Activated CD4-positive, alpha-beta T cell treated with anti-CD3 and anti-CD28 coated beads for 36 hours (primary cell): ENCODE measurements at regions of chr11 and their contacts with region 1.

Region 1: GRCh38 chr11:14953904-14954303 is 18.2 kb downstream of the CALCA start:
- DNase-seq: no peak
- ATAC-seq: no peak
- H3K4me3 Mint-ChIP-seq: no peak overlapping the region
- H3K27ac Mint-ChIP-seq: no peak overlapping the region
- H3K4me1 Mint-ChIP-seq: no peaks in the 10 kb centered on the region
- H3K27me3 Mint-ChIP-seq: no peaks in the 10 kb centered on the region

Region 2: DNA sequence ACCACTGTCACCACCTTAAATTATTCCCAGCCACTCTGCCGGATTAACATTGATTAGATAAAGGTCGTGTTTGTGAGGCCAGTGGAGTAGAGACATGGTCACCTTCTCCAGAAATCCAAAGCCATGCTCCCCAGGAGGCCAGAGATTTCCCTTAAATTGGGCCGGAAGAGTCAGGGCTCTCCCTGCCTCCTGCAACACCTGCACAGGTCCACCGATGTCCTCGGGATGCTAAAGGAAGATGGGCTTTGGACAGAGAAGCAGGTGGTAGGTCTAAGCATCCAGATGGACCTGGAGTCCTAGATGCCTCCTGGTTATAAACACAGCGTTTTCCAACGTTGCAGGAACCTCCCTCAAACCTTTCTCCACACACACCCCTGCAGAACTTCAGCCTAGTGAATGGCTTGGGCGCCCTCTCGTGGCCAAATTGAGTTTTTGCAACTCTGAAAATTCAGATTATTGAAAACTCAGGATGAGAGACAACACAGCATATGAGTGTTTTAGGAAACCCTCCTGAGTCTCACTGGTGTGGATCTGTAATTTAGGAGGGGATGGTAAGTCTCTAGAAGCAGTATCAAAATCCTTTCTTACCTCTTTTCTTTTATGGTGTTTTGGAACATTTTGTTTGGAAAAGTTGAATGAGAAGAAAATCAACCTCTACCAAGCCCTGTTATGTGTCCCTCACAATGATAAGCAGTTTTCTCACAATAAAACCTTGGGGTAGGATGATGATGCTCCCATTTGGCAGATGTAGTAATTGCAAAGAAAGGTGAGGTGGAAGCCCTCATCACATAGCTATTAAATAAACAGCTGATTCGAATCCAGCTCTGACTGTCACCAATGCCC is 704.6 kb before region 1 on chr11:
- CTCF ChIA-PET with region 1: no interaction called
- POLR2A ChIA-PET with region 1: no interaction called
- intact Hi-C with region 1: no loop called
- DNase-seq: peak; percentile 82
- ATAC-seq: peak; percentile 73
- H3K4me3 Mint-ChIP-seq: no peak overlapping the region
- H3K27ac Mint-ChIP-seq: no peak overlapping the region
- H3K4me1 Mint-ChIP-seq: peaks cover 18% of the 10 kb centered on the region
- H3K27me3 Mint-ChIP-seq: no peaks in the 10 kb centered on the region

Region 3: DNA sequence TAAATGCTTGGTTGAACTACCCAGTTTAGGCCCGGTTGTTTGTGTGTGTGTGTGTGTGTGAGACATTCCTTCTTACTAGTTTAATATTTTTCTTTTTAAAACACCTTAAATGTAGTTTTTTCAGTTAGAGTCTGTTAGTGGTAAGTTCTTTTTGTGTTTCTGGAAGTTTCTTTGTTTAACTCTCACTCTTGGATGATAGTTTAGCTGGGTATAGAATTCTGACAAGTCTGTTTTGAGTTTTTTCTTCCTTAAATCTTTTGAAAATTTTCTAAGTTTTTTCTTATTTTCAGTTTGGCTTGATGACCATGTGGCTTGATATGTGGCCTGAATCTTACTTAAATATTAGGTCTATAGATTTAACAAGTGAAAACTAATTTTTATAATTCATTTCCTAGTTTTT is 250.2 kb before region 1 on chr11:
- CTCF ChIA-PET with region 1: no interaction called
- POLR2A ChIA-PET with region 1: no interaction called
- intact Hi-C with region 1: no loop called
- DNase-seq: no peak
- ATAC-seq: no peak
- H3K4me3 Mint-ChIP-seq: no peak overlapping the region
- H3K27ac Mint-ChIP-seq: no peak overlapping the region
- H3K4me1 Mint-ChIP-seq: peaks cover 25% of the 10 kb centered on the region
- H3K27me3 Mint-ChIP-seq: no peaks in the 10 kb centered on the region

Region 4: GRCh38 chr11:14942745-14943144 is 11.2 kb before region 1 on chr11:
- CTCF ChIA-PET with region 1: interaction called, 11 read pairs
- POLR2A ChIA-PET with region 1: no interaction called
- intact Hi-C with region 1: no loop called
- DNase-seq: no peak
- ATAC-seq: no peak
- H3K4me3 Mint-ChIP-seq: no peak overlapping the region
- H3K27ac Mint-ChIP-seq: no peak overlapping the region
- H3K4me1 Mint-ChIP-seq: no peaks in the 10 kb centered on the region
- H3K27me3 Mint-ChIP-seq: no peaks in the 10 kb centered on the region

Region 5: GRCh38 chr11:15113381-15113780 is 159.5 kb after region 1 on chr11:
- CTCF ChIA-PET with region 1: no interaction called
- POLR2A ChIA-PET with region 1: no interaction called
- intact Hi-C with region 1: no loop called
- DNase-seq: peak; percentile 18
- ATAC-seq: peak; percentile 62
- H3K4me3 Mint-ChIP-seq: no peak overlapping the region
- H3K27ac Mint-ChIP-seq: no peak overlapping the region
- H3K4me1 Mint-ChIP-seq: peaks cover 8% of the 10 kb centered on the region
- H3K27me3 Mint-ChIP-seq: peaks cover 35% of the 10 kb centered on the region

Region 6: GRCh38 chr11:15673408-15673831 is 719.5 kb after region 1 on chr11:
- CTCF ChIA-PET with region 1: no interaction called
- POLR2A ChIA-PET with region 1: no interaction called
- intact Hi-C with region 1: no loop called
- DNase-seq: no peak
- ATAC-seq: no peak
- H3K4me3 Mint-ChIP-seq: no peak overlapping the region
- H3K27ac Mint-ChIP-seq: no peak overlapping the region
- H3K4me1 Mint-ChIP-seq: no peaks in the 10 kb centered on the region
- H3K27me3 Mint-ChIP-seq: peaks cover 8% of the 10 kb centered on the region